Left colon (tissue), 2 donors: ENCODE measurements at regions of chr12 and their contacts with region 1.

Region 1: DNA sequence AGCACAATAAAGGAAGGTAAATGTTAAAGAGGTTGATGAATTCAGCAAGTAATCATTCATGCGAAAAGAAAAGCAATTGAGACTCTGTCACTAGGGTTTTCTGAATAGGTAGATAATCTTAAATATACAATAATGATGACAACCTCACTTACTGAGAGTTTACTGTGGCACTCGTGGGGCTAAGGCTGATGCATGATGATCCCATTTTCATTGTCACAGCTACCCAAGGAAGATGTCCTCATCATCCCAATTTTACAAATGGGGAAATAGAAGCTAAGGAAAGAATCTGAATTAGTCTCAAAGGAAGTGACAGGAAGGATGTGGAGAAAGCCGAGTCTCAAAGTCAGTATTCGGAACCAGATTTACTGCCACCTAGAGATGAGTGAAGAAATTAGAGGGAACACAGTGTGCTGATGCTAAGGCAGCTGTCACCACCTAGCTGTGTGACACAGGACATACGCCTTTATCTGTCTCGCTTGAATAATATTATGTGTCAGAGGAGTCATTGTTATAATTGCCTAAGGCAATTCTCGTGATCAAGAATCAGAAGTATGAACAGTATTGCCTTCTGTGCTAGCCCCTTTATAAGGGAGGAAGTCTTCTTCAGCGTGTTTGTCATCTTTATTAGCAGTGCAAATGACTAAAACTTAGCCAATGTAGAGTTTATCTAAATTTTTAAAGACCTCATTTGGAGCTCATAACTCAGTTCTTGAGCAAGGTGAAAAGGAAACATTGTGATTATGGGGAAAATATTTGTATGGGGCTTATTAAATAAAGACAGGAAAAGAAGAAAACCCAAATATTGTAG is 63.2 kb downstream of the ERGIC2 start:
- DNase-seq: peak; percentile 31
- ATAC-seq: peak; percentile 95

Region 2: GRCh38 chr12:29073628-29074239 is 244.0 kb before region 1 on chr12:
- intact Hi-C with region 1: loop called in 1 of 2 experiments (anchors 5 kb)
- DNase-seq: no peak
- ATAC-seq: peak; percentile 78